ENCODE measurements at regions of chr17 and their contacts with region 1.

Region 1: GRCh38 chr17:60817192-60817591 is 139.5 kb downstream of the BCAS3 start:
- DNase-seq: no peak
- ATAC-seq: no peak
- H3K4me3 ChIP-seq: no peak overlapping the region
- H3K27ac ChIP-seq: no peak overlapping the region
- H3K4me1 ChIP-seq: no peaks in the 10 kb centered on the region
- H3K27me3 ChIP-seq: no peaks in the 10 kb centered on the region
- CTCF ChIP-seq: no peak

Region 2: GRCh38 chr17:60641810-60642220 is 175.4 kb before region 1 on chr17:
- CTCF ChIA-PET with region 1: no interaction called
- POLR2A ChIA-PET with region 1: no interaction called
- in situ Hi-C with region 1: no loop called
- intact Hi-C with region 1: no loop called
- DNase-seq: peak; percentile 27
- ATAC-seq: peak; percentile 63; the same call in 1 of the 2 replicates
- H3K4me3 ChIP-seq: no peak overlapping the region
- H3K27ac ChIP-seq: no peak overlapping the region
- H3K4me1 ChIP-seq: no peaks in the 10 kb centered on the region
- H3K27me3 ChIP-seq: no peaks in the 10 kb centered on the region
- CTCF ChIP-seq: peak; percentile 55

Region 3: GRCh38 chr17:61461967-61462718 is 645.0 kb after region 1 on chr17:
- CTCF ChIA-PET with region 1: no interaction called
- POLR2A ChIA-PET with region 1: interaction called, 13 read pairs
- in situ Hi-C with region 1: no loop called
- intact Hi-C with region 1: no loop called
- DNase-seq: no peak
- ATAC-seq: no peak
- H3K4me3 ChIP-seq: peak overlapping the region; percentile 20 to 47
- H3K27ac ChIP-seq: no peak overlapping the region
- H3K4me1 ChIP-seq: peaks cover 7% of the 10 kb centered on the region; the same call in 1 of the 2 replicates
- H3K27me3 ChIP-seq: no peaks in the 10 kb centered on the region
- CTCF ChIP-seq: no peak